ENCODE measurements at regions of chr14 and their contacts with region 1.

Region 1: DNA sequence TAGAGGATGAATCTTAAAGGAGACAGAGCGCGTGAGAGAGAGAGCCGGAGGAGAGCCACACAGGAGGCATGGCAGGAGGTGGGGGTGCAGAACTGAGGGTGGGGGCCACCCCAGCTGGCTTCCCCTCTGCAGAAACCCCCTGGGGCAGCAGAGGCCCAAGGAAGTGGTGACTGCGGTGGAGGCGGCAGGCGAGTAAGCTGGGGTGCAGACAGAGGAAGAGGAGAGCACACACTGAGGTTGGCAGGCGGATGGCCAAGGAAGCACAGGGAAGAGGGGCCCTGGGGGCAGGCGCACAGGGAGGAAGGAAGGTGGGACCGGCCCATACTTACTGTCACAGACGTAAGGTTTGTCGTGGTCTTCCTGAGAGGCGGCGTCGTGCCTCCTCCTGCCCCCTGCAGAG is 179.8 kb downstream of the DPF3 start:
- DNase-seq: no peak
- ATAC-seq: no peak

Region 2: GRCh38 chr14:72666610-72667009 is 47.5 kb before region 1 on chr14:
- intact Hi-C with region 1: no loop called
- DNase-seq: no peak
- ATAC-seq: no peak

Region 3: GRCh38 chr14:72792051-72792788 is 78.1 kb after region 1 on chr14:
- intact Hi-C with region 1: loop called (anchors 5 kb)
- DNase-seq: no peak
- ATAC-seq: peak; percentile 92

Region 4: GRCh38 chr14:72812292-72812911 is 98.3 kb after region 1 on chr14:
- intact Hi-C with region 1: loop called (anchors 5 kb)
- DNase-seq: peak; percentile 78
- ATAC-seq: peak; percentile 94

Region 5: DNA sequence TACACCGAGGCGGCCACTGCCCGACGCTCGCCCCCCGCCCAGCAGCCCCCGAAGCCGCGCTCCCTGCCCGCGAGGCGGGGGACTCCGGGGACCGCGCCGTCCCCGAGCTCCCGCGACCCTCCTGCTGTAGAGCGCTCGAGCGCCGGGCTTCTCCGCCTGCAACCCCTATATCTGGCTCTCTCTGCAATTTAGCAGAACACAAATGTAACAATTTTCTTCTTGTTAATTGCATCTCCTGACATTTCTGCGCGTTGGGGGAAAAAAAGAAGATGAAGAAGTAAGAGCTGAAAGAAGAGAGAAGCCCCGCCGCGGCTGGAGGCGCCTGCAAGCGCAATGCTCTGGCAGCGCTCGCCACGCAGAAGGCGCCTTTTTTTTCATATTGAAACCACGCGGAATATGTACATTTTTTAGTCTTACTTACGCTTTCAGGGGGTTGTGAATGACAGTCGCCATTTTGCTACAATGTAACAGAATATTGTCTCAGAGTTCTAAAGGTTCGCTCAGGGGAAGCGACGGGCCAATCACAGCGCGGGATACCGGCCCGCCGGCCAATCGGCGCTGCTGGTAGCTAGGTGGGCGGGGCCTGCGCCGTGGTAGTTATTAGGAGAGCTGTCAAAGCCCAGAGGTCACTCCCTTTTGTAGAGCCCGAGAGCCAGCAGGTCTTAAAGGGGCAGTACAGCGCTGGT is 179.7 kb after region 1 on chr14 and contains the start of gene DPF3:
- intact Hi-C with region 1: loop called (anchors 2 kb)
- DNase-seq: peak; percentile 98
- ATAC-seq: peak; percentile 98
- total RNA-seq, gene DPF3: 27.3 TPM